ENCODE measurements at regions of chr17 and their contacts with region 1.

Region 1: GRCh38 chr17:45828628-45829027 is 16.1 kb upstream of the SPPL2C start:
- DNase-seq: no peak
- H3K4me3 ChIP-seq: no peak overlapping the region
- H3K27ac ChIP-seq: no peak overlapping the region
- H3K4me1 ChIP-seq: peaks cover 0 to 2% (median 0%) of the 10 kb centered on the region in 4 experiments; a peak in 1 of 7 replicates
- H3K27me3 ChIP-seq: no peaks in the 10 kb centered on the region; a peak in 1 of 7 replicates
- CTCF ChIP-seq: no peak
- EP300 ChIP-seq: no peak
- POLR2A ChIP-seq: no peak
- RAD21 ChIP-seq: peak in 1 of 2 experiments; percentile 22; a peak in 1 of 4 replicates

Region 2: GRCh38 chr17:45573924-45574770 is 254.5 kb before region 1 on chr17:
- CTCF ChIA-PET with region 1: no interaction called
- POLR2A ChIA-PET with region 1: no interaction called
- DNase-seq: no peak
- H3K4me3 ChIP-seq: no peak overlapping the region
- H3K27ac ChIP-seq: no peak overlapping the region
- H3K4me1 ChIP-seq: peaks cover 0 to 3% (median 0%) of the 10 kb centered on the region in 4 experiments; a peak in 2 of 7 replicates
- H3K27me3 ChIP-seq: no peaks in the 10 kb centered on the region
- CTCF ChIP-seq: no peak
- EP300 ChIP-seq: no peak
- POLR2A ChIP-seq: no peak
- RAD21 ChIP-seq: no peak

Region 3: GRCh38 chr17:45660474-45660873 is 168.2 kb before region 1 on chr17:
- CTCF ChIA-PET with region 1: interaction called, 54 read pairs
- POLR2A ChIA-PET with region 1: no interaction called
- DNase-seq: no peak
- H3K4me3 ChIP-seq: no peak overlapping the region
- H3K27ac ChIP-seq: no peak overlapping the region
- H3K4me1 ChIP-seq: no peaks in the 10 kb centered on the region
- H3K27me3 ChIP-seq: peaks cover 0 to 2% (median 0%) of the 10 kb centered on the region in 4 experiments; a peak in 2 of 7 replicates
- CTCF ChIP-seq: no peak
- EP300 ChIP-seq: no peak
- POLR2A ChIP-seq: no peak
- RAD21 ChIP-seq: no peak

Region 4: DNA sequence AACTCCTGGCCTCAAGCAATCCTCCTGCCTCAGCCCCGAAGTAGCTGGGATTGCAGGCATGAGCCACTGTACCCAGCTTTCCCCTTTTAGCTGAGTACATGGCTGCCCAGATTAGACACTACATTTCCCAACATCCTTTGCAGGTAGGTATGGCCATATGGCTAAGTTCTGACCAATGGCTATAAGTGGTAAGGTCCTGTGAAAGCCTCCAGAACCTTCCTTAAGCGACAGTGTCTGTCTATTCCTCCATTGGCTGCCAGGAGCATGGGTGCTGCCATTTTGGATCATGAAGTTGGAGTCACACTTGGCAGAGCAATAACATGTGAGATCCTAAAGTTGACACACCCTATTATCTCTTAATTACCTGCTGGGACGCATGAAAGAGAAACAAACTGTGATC is 68.9 kb before region 1 on chr17:
- CTCF ChIA-PET with region 1: interaction called, 13 read pairs
- POLR2A ChIA-PET with region 1: interaction called, 3 read pairs
- DNase-seq: no peak
- H3K4me3 ChIP-seq: no peak overlapping the region
- H3K27ac ChIP-seq: no peak overlapping the region
- H3K4me1 ChIP-seq: peaks cover 0 to 3% (median 0%) of the 10 kb centered on the region in 4 experiments; a peak in 2 of 7 replicates
- H3K27me3 ChIP-seq: peaks cover 0 to 4% (median under 1%) of the 10 kb centered on the region in 4 experiments; a peak in 3 of 7 replicates
- CTCF ChIP-seq: no peak
- EP300 ChIP-seq: no peak
- POLR2A ChIP-seq: no peak
- RAD21 ChIP-seq: no peak

Region 5: GRCh38 chr17:45794840-45795239 is 33.8 kb before region 1 on chr17:
- CTCF ChIA-PET with region 1: interaction called, 14 read pairs
- POLR2A ChIA-PET with region 1: no interaction called
- DNase-seq: no peak
- H3K4me3 ChIP-seq: no peak overlapping the region
- H3K27ac ChIP-seq: no peak overlapping the region
- H3K4me1 ChIP-seq: peaks cover 0 to 8% (median 3%) of the 10 kb centered on the region in 4 experiments; a peak in 3 of 7 replicates
- H3K27me3 ChIP-seq: peaks cover 0 to 5% (median 0%) of the 10 kb centered on the region in 4 experiments; a peak in 1 of 7 replicates
- CTCF ChIP-seq: peak; percentile 45 to 61 (median 49)
- EP300 ChIP-seq: no peak
- POLR2A ChIP-seq: no peak
- RAD21 ChIP-seq: peak; percentile 44 to 62; a peak in 3 of 4 replicates

Region 6: DNA sequence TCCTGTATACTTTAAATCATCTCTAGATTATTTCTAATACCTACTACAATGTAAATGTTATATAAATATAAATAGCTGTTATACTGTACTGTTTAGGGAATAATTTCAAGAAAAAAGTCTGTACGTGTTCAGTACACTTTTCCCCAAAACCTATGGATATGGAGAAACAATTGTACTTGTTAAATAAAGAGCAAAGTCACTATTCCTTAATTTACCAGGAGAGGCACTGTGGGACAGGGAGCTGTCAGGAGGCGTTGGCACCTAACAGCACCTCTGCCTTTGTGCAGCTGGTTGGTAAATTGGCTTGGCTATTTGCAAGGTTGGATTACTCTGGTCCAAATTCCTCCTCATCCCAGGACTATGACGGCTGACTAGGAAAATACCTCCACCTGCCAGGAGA is 16.5 kb before region 1 on chr17:
- CTCF ChIA-PET with region 1: interaction called, 28 read pairs
- POLR2A ChIA-PET with region 1: no interaction called
- DNase-seq: no peak
- H3K4me3 ChIP-seq: no peak overlapping the region
- H3K27ac ChIP-seq: no peak overlapping the region
- H3K4me1 ChIP-seq: peaks cover 0 to 3% (median 0%) of the 10 kb centered on the region in 4 experiments; a peak in 1 of 7 replicates
- H3K27me3 ChIP-seq: no peaks in the 10 kb centered on the region
- CTCF ChIP-seq: peak; percentile 34 to 48 (median 47); a peak in 3 of 4 replicates
- EP300 ChIP-seq: no peak
- POLR2A ChIP-seq: no peak
- RAD21 ChIP-seq: peak; percentile 25 to 45; a peak in 3 of 4 replicates

Region 7: DNA sequence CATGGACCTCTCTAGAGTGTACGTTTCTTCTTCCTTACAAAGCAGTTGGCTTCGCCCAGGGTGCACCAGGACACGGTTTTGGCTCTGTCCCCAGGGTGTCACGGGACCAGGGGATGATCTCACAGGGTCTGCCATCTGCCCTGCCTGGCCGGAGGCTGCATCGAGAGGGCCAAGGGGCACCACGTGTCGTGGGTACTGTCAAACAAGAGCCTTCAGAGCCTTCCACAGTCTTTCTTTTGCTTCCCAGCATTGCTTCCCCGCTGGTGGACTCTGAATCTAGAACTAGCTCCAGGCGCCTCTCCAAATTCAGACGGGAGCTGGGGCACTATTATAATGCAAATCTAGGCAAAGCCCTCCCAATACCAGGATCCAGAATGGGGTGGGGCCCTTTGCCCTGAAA is 113.7 kb after region 1 on chr17:
- CTCF ChIA-PET with region 1: no interaction called
- POLR2A ChIA-PET with region 1: no interaction called
- DNase-seq: no peak
- H3K4me3 ChIP-seq: no peak overlapping the region
- H3K27ac ChIP-seq: no peak overlapping the region
- H3K4me1 ChIP-seq: peaks cover 2 to 8% (median 4%) of the 10 kb centered on the region in 4 experiments; a peak in 5 of 7 replicates
- H3K27me3 ChIP-seq: no peaks in the 10 kb centered on the region; a peak in 1 of 7 replicates
- CTCF ChIP-seq: no peak
- EP300 ChIP-seq: no peak
- POLR2A ChIP-seq: no peak
- RAD21 ChIP-seq: no peak

Measured in H1 (cell line).